Ascending aorta (tissue), 2 donors: ENCODE measurements at regions of chr6 and their contacts with region 1.

Region 1: GRCh38 chr6:28683944-28684538 is 158.4 kb downstream of the GPX5 start:
- DNase-seq: no peak
- H3K4me3 ChIP-seq: no peak overlapping the region
- H3K27ac ChIP-seq: no peak overlapping the region
- H3K4me1 ChIP-seq: no peaks in the 10 kb centered on the region
- H3K27me3 ChIP-seq: no peaks in the 10 kb centered on the region
- CTCF ChIP-seq: peak in 2 of 3 experiments; percentile 30 to 39

Region 2: DNA sequence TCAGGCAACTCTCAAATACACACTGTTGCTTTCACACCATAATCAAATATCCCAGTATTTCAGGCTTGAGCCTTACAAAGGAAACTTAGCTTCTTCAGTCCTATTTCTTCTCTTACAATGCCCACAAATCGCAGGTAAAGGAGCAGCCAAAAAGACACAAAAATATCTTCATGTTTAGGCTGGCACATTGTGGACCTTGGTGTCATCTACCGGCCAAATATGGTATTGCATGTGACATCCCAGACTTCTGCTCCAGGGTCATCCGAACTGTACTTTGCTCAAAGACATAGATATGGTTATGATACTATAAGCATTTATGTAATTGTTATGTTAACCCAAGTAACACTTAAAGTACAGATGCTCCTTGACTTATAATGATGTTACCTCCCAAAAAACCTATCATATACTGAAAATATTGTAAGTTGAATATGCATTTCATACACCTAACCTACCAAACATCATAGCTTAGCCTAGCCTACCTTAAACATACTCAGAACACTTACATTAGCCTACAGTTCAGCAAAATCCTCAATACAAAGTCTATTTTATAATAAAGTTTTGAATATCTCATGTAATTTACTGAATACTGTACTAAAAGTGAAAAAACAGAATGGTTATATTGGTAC is 905.5 kb after region 1 on chr6:
- intact Hi-C with region 1: loop called (anchors 5 kb)
- DNase-seq: no peak
- H3K4me3 ChIP-seq: no peak overlapping the region
- H3K27ac ChIP-seq: no peak overlapping the region
- H3K4me1 ChIP-seq: no peaks in the 10 kb centered on the region
- H3K27me3 ChIP-seq: no peaks in the 10 kb centered on the region
- CTCF ChIP-seq: peak; percentile 60 to 89 (median 75)